T-cell (primary cell): ENCODE measurements at regions of chr6 and their contacts with region 1.

Region 1: GRCh38 chr6:66265737-66266136 is 558.7 kb upstream of the EYS start:
- DNase-seq: no peak
- ATAC-seq: no peak
- H3K4me3 ChIP-seq: no peak overlapping the region
- H3K4me3 Mint-ChIP-seq: no peak overlapping the region
- H3K27ac ChIP-seq: no peak overlapping the region
- H3K27ac Mint-ChIP-seq: no peak overlapping the region
- H3K4me1 ChIP-seq: no peaks in the 10 kb centered on the region
- H3K4me1 Mint-ChIP-seq: no peaks in the 10 kb centered on the region
- H3K27me3 ChIP-seq: no peaks in the 10 kb centered on the region
- H3K27me3 Mint-ChIP-seq: no peaks in the 10 kb centered on the region

Region 2: GRCh38 chr6:66153247-66153646 is 112.5 kb before region 1 on chr6:
- CTCF ChIA-PET with region 1: no interaction called
- POLR2A ChIA-PET with region 1: no interaction called
- DNase-seq: no peak
- ATAC-seq: no peak
- H3K4me3 ChIP-seq: no peak overlapping the region
- H3K4me3 Mint-ChIP-seq: no peak overlapping the region
- H3K27ac ChIP-seq: no peak overlapping the region
- H3K27ac Mint-ChIP-seq: no peak overlapping the region
- H3K4me1 ChIP-seq: no peaks in the 10 kb centered on the region
- H3K4me1 Mint-ChIP-seq: no peaks in the 10 kb centered on the region
- H3K27me3 ChIP-seq: no peaks in the 10 kb centered on the region
- H3K27me3 Mint-ChIP-seq: no peaks in the 10 kb centered on the region

Region 3: GRCh38 chr6:66675906-66676305 is 410.2 kb after region 1 on chr6:
- CTCF ChIA-PET with region 1: no interaction called
- POLR2A ChIA-PET with region 1: interaction called in 1 of 2 experiments, 18 read pairs
- DNase-seq: no peak
- ATAC-seq: no peak
- H3K4me3 ChIP-seq: no peak overlapping the region
- H3K4me3 Mint-ChIP-seq: no peak overlapping the region
- H3K27ac ChIP-seq: no peak overlapping the region
- H3K27ac Mint-ChIP-seq: no peak overlapping the region
- H3K4me1 ChIP-seq: no peaks in the 10 kb centered on the region
- H3K4me1 Mint-ChIP-seq: no peaks in the 10 kb centered on the region
- H3K27me3 ChIP-seq: no peaks in the 10 kb centered on the region
- H3K27me3 Mint-ChIP-seq: no peaks in the 10 kb centered on the region